Caco-2 (cell line): ENCODE measurements at regions of chr14 and their contacts with region 1.

Region 1: DNA sequence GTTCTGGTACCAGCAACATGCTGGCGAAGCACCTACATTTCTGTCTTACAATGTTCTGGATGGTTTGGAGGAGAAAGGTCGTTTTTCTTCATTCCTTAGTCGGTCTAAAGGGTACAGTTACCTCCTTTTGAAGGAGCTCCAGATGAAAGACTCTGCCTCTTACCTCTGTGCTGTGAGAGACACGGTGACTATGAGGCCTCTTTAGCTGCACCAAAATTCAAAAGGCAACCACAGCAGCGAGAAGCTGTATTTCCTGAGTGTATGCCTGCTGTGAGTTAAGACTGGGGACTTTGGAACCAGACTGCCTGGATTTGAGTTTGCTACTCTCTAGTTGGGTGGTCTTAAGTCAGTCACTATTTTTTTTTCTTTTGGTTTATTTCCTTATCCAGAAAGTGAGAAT is 8.7 kb upstream of the OR10G2 start:
- DNase-seq: no peak
- H3K4me3 ChIP-seq: no peak overlapping the region
- H3K4me3 Mint-ChIP-seq: no peak overlapping the region
- H3K27ac Mint-ChIP-seq: no peak overlapping the region
- H3K4me1 ChIP-seq: no peaks in the 10 kb centered on the region
- H3K4me1 Mint-ChIP-seq: no peaks in the 10 kb centered on the region
- H3K27me3 ChIP-seq: no peaks in the 10 kb centered on the region
- H3K27me3 Mint-ChIP-seq: no peaks in the 10 kb centered on the region
- CTCF ChIP-seq: no peak

Region 2: DNA sequence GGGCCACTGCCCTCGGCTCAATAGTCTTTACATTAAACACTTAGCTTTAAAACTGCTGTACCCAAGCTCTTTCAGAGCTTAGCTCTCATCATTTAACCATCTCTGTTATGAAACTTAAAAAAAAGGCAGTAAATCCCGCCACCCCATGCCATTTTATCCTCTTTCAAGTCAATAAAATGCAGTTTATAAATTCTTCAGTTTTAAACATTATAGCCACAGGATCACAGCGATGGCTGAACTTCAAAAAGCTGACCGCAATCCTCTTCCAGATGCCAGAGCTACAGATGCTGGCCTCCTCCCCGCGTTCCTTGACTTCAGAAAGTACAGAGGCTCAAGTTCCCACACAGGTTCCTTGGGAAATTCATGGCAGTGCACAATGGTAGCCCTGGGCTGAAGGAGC is 67.7 kb before region 1 on chr14:
- CTCF ChIA-PET with region 1: no interaction called
- POLR2A ChIA-PET with region 1: no interaction called
- intact Hi-C with region 1: no loop called
- DNase-seq: no peak
- H3K4me3 ChIP-seq: no peak overlapping the region
- H3K4me3 Mint-ChIP-seq: no peak overlapping the region
- H3K27ac Mint-ChIP-seq: no peak overlapping the region
- H3K4me1 ChIP-seq: no peaks in the 10 kb centered on the region
- H3K4me1 Mint-ChIP-seq: no peaks in the 10 kb centered on the region
- H3K27me3 ChIP-seq: no peaks in the 10 kb centered on the region
- H3K27me3 Mint-ChIP-seq: peaks cover 9% of the 10 kb centered on the region
- CTCF ChIP-seq: no peak

Region 3: GRCh38 chr14:21711360-21711961 is 68.1 kb after region 1 on chr14:
- CTCF ChIA-PET with region 1: no interaction called
- POLR2A ChIA-PET with region 1: no interaction called
- intact Hi-C with region 1: loop called (anchors 2 kb)
- DNase-seq: peak in 1 of 2 experiments; percentile 37
- H3K4me3 ChIP-seq: no peak overlapping the region
- H3K4me3 Mint-ChIP-seq: no peak overlapping the region
- H3K27ac Mint-ChIP-seq: no peak overlapping the region
- H3K4me1 ChIP-seq: peaks cover 9% of the 10 kb centered on the region; the same call in 1 of the 2 replicates
- H3K4me1 Mint-ChIP-seq: no peaks in the 10 kb centered on the region
- H3K27me3 ChIP-seq: no peaks in the 10 kb centered on the region
- H3K27me3 Mint-ChIP-seq: peaks cover 3% of the 10 kb centered on the region
- CTCF ChIP-seq: peak; percentile 82 to 87

Region 4: DNA sequence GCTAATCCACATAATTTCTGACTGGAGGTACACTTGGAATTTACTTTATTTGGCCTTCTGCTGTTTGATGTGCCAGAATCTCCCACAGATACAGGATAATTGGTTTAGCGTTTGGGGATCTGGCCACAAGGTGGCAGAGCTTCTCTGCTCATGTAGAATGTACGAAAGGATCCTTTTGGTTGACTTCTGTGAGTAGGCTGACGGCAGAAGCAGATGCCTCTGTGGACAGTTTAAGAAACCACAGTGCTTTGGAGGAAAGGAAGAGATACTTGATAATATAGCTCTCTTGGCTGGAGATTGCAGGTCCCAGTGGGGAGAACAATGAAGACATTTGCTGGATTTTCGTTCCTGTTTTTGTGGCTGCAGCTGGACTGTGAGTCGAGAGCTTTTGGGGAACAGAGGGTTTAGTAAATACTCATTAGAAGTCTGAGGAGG is 105.5 kb after region 1 on chr14:
- CTCF ChIA-PET with region 1: no interaction called
- POLR2A ChIA-PET with region 1: no interaction called
- intact Hi-C with region 1: loop called (anchors 2 kb)
- DNase-seq: peak; percentile 52 to 60
- H3K4me3 ChIP-seq: no peak overlapping the region
- H3K4me3 Mint-ChIP-seq: no peak overlapping the region
- H3K27ac Mint-ChIP-seq: no peak overlapping the region
- H3K4me1 ChIP-seq: no peaks in the 10 kb centered on the region
- H3K4me1 Mint-ChIP-seq: no peaks in the 10 kb centered on the region
- H3K27me3 ChIP-seq: no peaks in the 10 kb centered on the region
- H3K27me3 Mint-ChIP-seq: peaks cover 15% of the 10 kb centered on the region
- CTCF ChIP-seq: peak; percentile 60 to 77